Posterior vena cava (tissue), 2 donors: ENCODE measurements at regions of chr5 and their contacts with region 1.

Region 1: GRCh38 chr5:143057580-143057999 is 287.4 kb downstream of the ARHGAP26 start:
- DNase-seq: no peak

Region 2: GRCh38 chr5:142946547-142947426 is 110.8 kb before region 1 on chr5:
- intact Hi-C with region 1: no loop called
- DNase-seq: no peak

Region 3: GRCh38 chr5:143076377-143076776 is 18.8 kb after region 1 on chr5:
- intact Hi-C with region 1: loop called in 1 of 2 experiments (anchors 1 kb)
- DNase-seq: no peak